ENCODE measurements at regions of chr14 and their contacts with region 1.

Region 1: GRCh38 chr14:75278422-75279161 is at the start of gene FOS:
- DNase-seq: peak; percentile 95 to 97 (median 95)
- H3K4me3 ChIP-seq: peak within 1 kb of the TSS; percentile 80 to 100 (median 91)
- H3K4me3 Mint-ChIP-seq: peak within 1 kb of the TSS; percentile 95 to 100
- H3K27ac ChIP-seq: peak within 1 kb of the TSS; percentile 92 to 98
- H3K27ac Mint-ChIP-seq: peak within 1 kb of the TSS; percentile 98 to 100 (median 99)
- H3K4me1 ChIP-seq: peaks cover 54 to 64% of the 10 kb centered on the region in 2 donors
- H3K4me1 Mint-ChIP-seq: peaks cover 60% of the 10 kb centered on the region
- H3K27me3 ChIP-seq: no peaks in the 10 kb centered on the region
- H3K27me3 Mint-ChIP-seq: peaks cover 0 to 38% (median 7%) of the 10 kb centered on the region in 3 donors
- CTCF ChIP-seq: no peak
- polyA plus RNA-seq, gene FOS: 4,403 to 5,159 (median 4,841) TPM

Region 2: DNA sequence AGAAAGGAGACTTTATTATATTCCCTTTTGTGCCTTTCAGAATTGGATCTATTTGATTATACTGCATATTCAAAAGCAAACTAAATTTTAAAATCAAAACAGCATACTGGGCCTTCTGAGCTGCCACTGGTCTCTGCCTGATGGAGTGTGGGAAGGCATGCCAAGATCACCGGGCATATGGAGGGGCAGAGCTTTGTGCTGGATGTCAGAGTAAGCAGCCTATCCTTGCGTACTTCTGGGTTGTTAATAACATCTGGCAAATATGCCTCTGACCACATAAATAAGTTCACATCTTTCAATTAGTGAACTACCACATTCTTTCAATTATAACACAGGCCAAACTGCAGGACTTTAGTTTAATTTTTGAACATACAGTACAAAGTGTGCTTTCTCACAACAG is 245.7 kb before region 1 on chr14:
- intact Hi-C with region 1: no loop called
- DNase-seq: no peak
- H3K4me3 ChIP-seq: no peak overlapping the region
- H3K4me3 Mint-ChIP-seq: no peak overlapping the region
- H3K27ac ChIP-seq: no peak overlapping the region
- H3K27ac Mint-ChIP-seq: no peak overlapping the region
- H3K4me1 ChIP-seq: no peaks in the 10 kb centered on the region
- H3K4me1 Mint-ChIP-seq: no peaks in the 10 kb centered on the region
- H3K27me3 ChIP-seq: no peaks in the 10 kb centered on the region
- H3K27me3 Mint-ChIP-seq: no peaks in the 10 kb centered on the region
- CTCF ChIP-seq: no peak

Region 3: GRCh38 chr14:75132382-75133086 is 146.1 kb before region 1 on chr14:
- intact Hi-C with region 1: loop called (anchors 5 kb)
- DNase-seq: peak; percentile 64 to 85 (median 74)
- H3K4me3 ChIP-seq: no peak overlapping the region
- H3K4me3 Mint-ChIP-seq: no peak overlapping the region
- H3K27ac ChIP-seq: no peak overlapping the region
- H3K27ac Mint-ChIP-seq: peak overlapping the region in 6 of 7 donors; percentile 24 to 78 (median 55)
- H3K4me1 ChIP-seq: peaks cover 10 to 13% of the 10 kb centered on the region in 2 donors
- H3K4me1 Mint-ChIP-seq: peaks cover 14% of the 10 kb centered on the region
- H3K27me3 ChIP-seq: no peaks in the 10 kb centered on the region
- H3K27me3 Mint-ChIP-seq: no peaks in the 10 kb centered on the region
- CTCF ChIP-seq: peak; percentile 69

Region 4: DNA sequence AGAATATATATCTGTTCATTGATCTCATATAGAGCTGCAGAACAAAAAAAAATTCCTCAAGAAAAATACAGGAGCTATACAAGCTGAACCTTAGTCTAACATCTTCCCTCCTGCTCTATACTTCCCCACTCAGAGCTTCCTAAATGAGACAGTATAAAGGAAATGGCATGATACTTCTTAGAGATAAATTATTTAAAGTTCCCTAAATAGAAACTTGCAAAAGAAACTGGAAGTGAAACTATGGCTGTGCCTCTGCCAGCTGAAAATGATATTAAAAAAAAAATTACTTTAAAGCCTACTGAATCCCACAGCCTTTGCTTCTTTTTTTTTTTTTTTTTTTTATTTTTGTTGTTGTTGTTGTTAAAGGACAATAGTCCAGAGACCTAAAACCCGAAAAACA is 140.1 kb before region 1 on chr14:
- intact Hi-C with region 1: loop called (anchors 5 kb)
- DNase-seq: peak; percentile 49 to 83 (median 68)
- H3K4me3 ChIP-seq: peak overlapping the region in 1 of 3 experiments; percentile 50
- H3K4me3 Mint-ChIP-seq: no peak overlapping the region
- H3K27ac ChIP-seq: peak overlapping the region in 1 of 2 donors; percentile 55
- H3K27ac Mint-ChIP-seq: peak overlapping the region in 6 of 7 donors; percentile 46 to 92 (median 76)
- H3K4me1 ChIP-seq: peaks cover 41 to 59% of the 10 kb centered on the region in 2 donors
- H3K4me1 Mint-ChIP-seq: peaks cover 46% of the 10 kb centered on the region
- H3K27me3 ChIP-seq: no peaks in the 10 kb centered on the region
- H3K27me3 Mint-ChIP-seq: peaks cover 0 to 2% (median 0%) of the 10 kb centered on the region in 3 donors
- CTCF ChIP-seq: no peak

Region 5: DNA sequence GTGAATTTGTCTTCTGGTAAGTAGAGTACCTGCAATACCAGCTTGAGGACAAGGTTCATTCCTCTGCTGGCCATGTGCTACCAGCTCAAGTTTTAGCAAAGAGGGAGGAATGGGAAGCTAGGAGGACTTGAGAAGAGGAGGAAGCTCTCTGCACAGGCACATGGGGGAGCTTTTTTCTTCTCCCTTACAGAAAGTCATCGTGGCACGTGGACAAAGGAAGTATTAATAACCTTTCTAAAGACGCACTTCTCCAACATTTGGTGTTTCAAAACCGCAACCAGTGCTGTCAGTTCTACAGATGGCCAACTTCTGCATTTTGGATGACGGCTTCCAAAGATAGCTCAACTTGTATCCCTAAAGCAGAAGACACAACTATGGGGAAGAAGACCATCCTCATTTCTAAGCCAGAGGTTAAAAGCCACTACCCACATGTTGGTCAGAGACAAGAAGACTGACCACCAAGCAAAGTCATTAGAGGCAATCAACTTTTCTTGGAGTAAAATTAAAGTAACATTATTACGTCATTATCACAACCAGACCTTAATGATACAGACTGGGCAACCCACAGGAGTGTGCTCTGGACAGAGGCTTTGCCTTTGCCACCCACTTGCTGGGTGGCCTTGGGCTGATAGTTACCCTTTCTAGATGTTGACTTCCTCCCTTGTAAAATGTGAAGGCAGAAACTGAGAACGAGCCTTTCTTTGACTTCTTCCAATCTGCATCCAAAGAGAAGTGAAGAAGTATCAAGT is 89.9 kb before region 1 on chr14:
- intact Hi-C with region 1: loop called (anchors 5 kb)
- DNase-seq: peak; percentile 95 to 99 (median 97)
- H3K4me3 ChIP-seq: peak overlapping the region in 1 of 3 experiments; percentile 31
- H3K4me3 Mint-ChIP-seq: peak overlapping the region in 1 of 2 donors; percentile 28
- H3K27ac ChIP-seq: peak overlapping the region; percentile 74 to 82
- H3K27ac Mint-ChIP-seq: peak overlapping the region; percentile 92 to 96 (median 94)
- H3K4me1 ChIP-seq: peaks cover 56 to 68% of the 10 kb centered on the region in 2 donors
- H3K4me1 Mint-ChIP-seq: peaks cover 57% of the 10 kb centered on the region
- H3K27me3 ChIP-seq: no peaks in the 10 kb centered on the region
- H3K27me3 Mint-ChIP-seq: no peaks in the 10 kb centered on the region
- CTCF ChIP-seq: no peak

Region 6: DNA sequence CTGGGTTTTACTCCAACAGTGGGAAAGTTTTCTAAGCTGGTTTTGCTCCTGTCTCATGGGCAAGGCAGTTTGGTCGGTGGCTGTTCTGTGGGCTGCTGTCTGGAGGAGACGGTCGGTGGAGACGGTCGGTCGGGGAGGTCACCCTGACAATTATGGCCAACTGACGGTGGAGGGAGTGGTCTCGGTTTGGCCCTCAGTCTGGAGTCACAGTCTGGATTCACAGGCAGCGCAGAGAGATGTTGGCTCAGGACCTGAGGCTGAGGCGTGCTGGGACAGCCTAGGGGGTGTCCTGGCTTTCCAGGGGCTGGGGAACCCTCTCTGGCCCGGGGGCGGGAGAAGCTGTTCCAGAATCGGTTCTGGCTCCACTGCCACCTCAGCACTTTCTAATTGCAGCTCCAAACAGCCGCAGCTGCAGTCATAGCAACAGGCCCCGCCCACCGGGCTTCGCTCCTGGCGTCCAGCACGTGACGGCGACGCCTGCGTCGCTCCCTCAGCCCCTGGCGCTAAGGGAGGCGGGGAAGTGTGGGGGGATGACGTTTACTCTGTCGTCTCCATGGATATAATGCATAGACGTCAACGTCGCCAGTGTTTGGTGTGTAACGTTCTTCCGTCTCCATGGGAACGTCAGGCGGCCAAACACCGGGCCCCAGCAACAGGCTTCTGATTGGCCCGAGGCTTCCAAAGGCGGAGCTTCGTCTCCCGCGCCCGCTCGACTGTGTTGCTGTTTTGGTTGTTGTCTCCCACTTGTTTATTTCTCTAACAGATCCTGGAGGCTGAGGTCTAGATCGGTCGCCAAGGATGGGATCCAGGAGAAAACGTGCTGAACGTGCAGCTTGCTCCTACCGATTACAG is 19.8 kb before region 1 on chr14:
- intact Hi-C with region 1: loop called (anchors 1 to 2 kb)
- DNase-seq: peak; percentile 100
- H3K4me3 ChIP-seq: peak overlapping the region; percentile 31 to 64 (median 39)
- H3K4me3 Mint-ChIP-seq: peak overlapping the region; percentile 79 to 92
- H3K27ac ChIP-seq: peak overlapping the region; percentile 98 to 100
- H3K27ac Mint-ChIP-seq: peak overlapping the region; percentile 99 to 100 (median 100)
- H3K4me1 ChIP-seq: peaks cover 30 to 44% of the 10 kb centered on the region in 2 donors
- H3K4me1 Mint-ChIP-seq: peaks cover 51% of the 10 kb centered on the region
- H3K27me3 ChIP-seq: no peaks in the 10 kb centered on the region
- H3K27me3 Mint-ChIP-seq: peaks cover 0 to 2% (median 1%) of the 10 kb centered on the region in 3 donors
- CTCF ChIP-seq: peak; percentile 2

Region 7: GRCh38 chr14:75315144-75315543 is 36.6 kb after region 1 on chr14:
- intact Hi-C with region 1: no loop called
- DNase-seq: no peak
- H3K4me3 ChIP-seq: no peak overlapping the region
- H3K4me3 Mint-ChIP-seq: no peak overlapping the region
- H3K27ac ChIP-seq: no peak overlapping the region
- H3K27ac Mint-ChIP-seq: peak overlapping the region in 3 of 7 donors; percentile 64 to 83 (median 66)
- H3K4me1 ChIP-seq: peaks cover 45 to 48% of the 10 kb centered on the region in 2 donors
- H3K4me1 Mint-ChIP-seq: peaks cover 63% of the 10 kb centered on the region
- H3K27me3 ChIP-seq: no peaks in the 10 kb centered on the region
- H3K27me3 Mint-ChIP-seq: peaks cover 0 to 4% (median 0%) of the 10 kb centered on the region in 3 donors
- CTCF ChIP-seq: no peak

Measured in CD14-positive monocyte (primary cell).